Activated B cell treated with CpG ODN at 0.5 μM for 24 hours (primary cell): ENCODE measurements at regions of chrX and their contacts with region 1.

Region 1: GRCh38 chrX:72604112-72604511 is 31.5 kb upstream of the HDAC8 start:
- DNase-seq: no peak
- ATAC-seq: no peak
- H3K4me3 Mint-ChIP-seq: no peak overlapping the region
- H3K27ac Mint-ChIP-seq: no peak overlapping the region
- H3K4me1 Mint-ChIP-seq: no peaks in the 10 kb centered on the region
- H3K27me3 Mint-ChIP-seq: no peaks in the 10 kb centered on the region
- CTCF ChIP-seq: no peak

Region 2: GRCh38 chrX:72408885-72409284 is 195.2 kb before region 1 on chrX:
- CTCF ChIA-PET with region 1: no interaction called
- POLR2A ChIA-PET with region 1: no interaction called
- intact Hi-C with region 1: no loop called
- DNase-seq: no peak
- ATAC-seq: no peak
- H3K4me3 Mint-ChIP-seq: no peak overlapping the region
- H3K27ac Mint-ChIP-seq: no peak overlapping the region
- H3K4me1 Mint-ChIP-seq: no peaks in the 10 kb centered on the region
- H3K27me3 Mint-ChIP-seq: no peaks in the 10 kb centered on the region
- CTCF ChIP-seq: no peak

Region 3: GRCh38 chrX:72554448-72555140 is 49.5 kb before region 1 on chrX:
- CTCF ChIA-PET with region 1: no interaction called
- POLR2A ChIA-PET with region 1: no interaction called
- intact Hi-C with region 1: loop called (anchors 5 kb)
- DNase-seq: no peak
- ATAC-seq: no peak
- H3K4me3 Mint-ChIP-seq: no peak overlapping the region
- H3K27ac Mint-ChIP-seq: no peak overlapping the region
- H3K4me1 Mint-ChIP-seq: peaks cover 6% of the 10 kb centered on the region
- H3K27me3 Mint-ChIP-seq: no peaks in the 10 kb centered on the region
- CTCF ChIP-seq: no peak

Region 4: DNA sequence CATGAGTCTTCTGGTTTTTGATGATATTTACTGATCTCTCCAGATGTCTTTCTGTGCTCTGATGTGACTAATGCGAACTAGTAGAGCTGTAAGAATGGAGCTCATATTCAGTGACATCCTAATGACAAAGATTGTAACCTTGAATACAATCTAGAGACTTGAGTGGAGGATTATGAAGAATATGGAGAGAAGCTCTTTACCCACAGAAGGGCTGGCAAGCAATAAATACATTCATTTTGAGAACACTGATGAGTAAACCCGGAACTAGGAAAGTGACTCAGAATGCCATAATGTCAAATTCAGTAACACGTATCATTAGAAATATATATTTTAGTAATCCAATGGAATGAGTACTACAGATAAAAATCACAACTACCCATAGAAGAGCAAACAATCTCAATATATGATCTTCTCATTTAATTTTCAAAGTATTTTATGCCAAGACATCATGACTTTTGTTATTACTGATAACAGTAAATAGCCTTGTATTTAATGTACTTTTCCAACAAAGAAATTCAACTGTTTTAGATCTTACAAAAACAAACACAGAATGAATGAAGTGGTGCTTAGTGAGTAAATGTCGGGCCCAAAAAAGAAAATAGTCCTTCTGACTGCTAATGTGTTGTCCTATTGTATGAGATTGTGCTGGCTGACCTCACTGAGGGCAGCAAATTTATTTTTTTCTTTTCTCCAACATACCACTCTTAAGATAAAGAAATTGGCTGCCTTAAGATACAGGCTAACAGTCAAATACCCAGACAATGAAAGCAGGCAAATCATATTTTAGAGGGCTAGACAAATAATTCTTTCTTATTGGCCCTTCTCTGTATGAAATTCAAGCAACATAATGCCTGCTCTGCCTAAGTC is 17.7 kb after region 1 on chrX:
- CTCF ChIA-PET with region 1: no interaction called
- POLR2A ChIA-PET with region 1: no interaction called
- intact Hi-C with region 1: no loop called
- DNase-seq: no peak
- ATAC-seq: no peak
- H3K4me3 Mint-ChIP-seq: no peak overlapping the region
- H3K27ac Mint-ChIP-seq: no peak overlapping the region
- H3K4me1 Mint-ChIP-seq: no peaks in the 10 kb centered on the region
- H3K27me3 Mint-ChIP-seq: no peaks in the 10 kb centered on the region
- CTCF ChIP-seq: no peak

Region 5: GRCh38 chrX:72694170-72694569 is 90.1 kb after region 1 on chrX:
- CTCF ChIA-PET with region 1: no interaction called
- POLR2A ChIA-PET with region 1: no interaction called
- intact Hi-C with region 1: no loop called
- DNase-seq: no peak
- ATAC-seq: no peak
- H3K4me3 Mint-ChIP-seq: no peak overlapping the region
- H3K27ac Mint-ChIP-seq: no peak overlapping the region
- H3K4me1 Mint-ChIP-seq: no peaks in the 10 kb centered on the region
- H3K27me3 Mint-ChIP-seq: no peaks in the 10 kb centered on the region
- CTCF ChIP-seq: no peak

Region 6: GRCh38 chrX:72714476-72714916 is 110.4 kb after region 1 on chrX:
- CTCF ChIA-PET with region 1: no interaction called
- POLR2A ChIA-PET with region 1: no interaction called
- intact Hi-C with region 1: no loop called
- DNase-seq: no peak
- ATAC-seq: no peak
- H3K4me3 Mint-ChIP-seq: no peak overlapping the region
- H3K27ac Mint-ChIP-seq: no peak overlapping the region
- H3K4me1 Mint-ChIP-seq: peaks cover 6% of the 10 kb centered on the region
- H3K27me3 Mint-ChIP-seq: peaks cover 5% of the 10 kb centered on the region
- CTCF ChIP-seq: no peak